Adrenal gland (tissue), 19 donors: ENCODE measurements at regions of chr11 and their contacts with region 1.

Region 1: DNA sequence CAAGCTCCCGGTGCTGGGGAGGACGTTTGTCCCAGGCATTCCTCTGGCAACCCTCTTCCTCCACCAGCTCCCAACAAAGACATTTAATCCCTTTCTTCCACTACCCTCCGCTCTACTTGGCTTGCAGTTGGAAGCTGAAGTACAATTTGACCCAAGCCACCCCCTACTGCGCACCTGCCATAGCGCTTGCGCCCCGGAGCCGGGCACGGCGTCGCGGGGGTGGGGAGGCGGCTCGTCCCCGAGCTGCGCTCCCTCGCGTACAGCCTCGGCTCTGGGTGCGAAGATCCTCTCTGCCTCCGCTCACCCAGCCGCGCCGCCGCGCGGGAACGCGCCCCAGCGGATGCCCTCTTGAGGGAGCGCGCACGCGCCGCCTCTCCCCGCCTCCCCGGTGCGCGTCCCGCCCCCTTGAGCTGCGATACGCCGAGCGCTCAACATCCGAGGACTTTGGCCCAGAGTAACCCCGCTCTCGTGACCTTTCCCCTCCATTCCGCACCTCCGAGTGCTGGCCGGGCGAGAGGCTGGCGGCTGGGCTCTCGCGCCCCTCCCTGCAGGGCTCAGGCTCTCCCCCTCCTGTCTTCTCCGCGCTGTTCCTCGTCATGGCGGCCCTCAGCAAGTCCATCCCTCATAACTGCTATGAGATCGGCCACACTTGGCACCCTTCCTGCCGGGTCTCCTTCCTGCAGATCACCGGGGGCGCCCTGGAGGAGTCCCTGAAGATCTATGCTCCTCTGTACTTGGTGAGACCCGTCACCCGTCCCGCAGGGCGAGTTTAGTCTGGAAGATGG is at the start of gene TMEM135:
- DNase-seq: peak; percentile 95 to 97 (median 95)
- H3K4me3 ChIP-seq: peak within 1 kb of the TSS; percentile 82 to 100 (median 96)
- H3K27ac ChIP-seq: peak within 1 kb of the TSS; percentile 74 to 89 (median 83)
- H3K4me1 ChIP-seq: peaks cover 23 to 27% of the 10 kb centered on the region in 2 donors
- H3K27me3 ChIP-seq: no peaks in the 10 kb centered on the region
- CTCF ChIP-seq: no peak
- POLR2A ChIP-seq: peak; percentile 67 to 88
- total RNA-seq, gene TMEM135: 32.6 to 101 (median 46.3) TPM

Region 2: DNA sequence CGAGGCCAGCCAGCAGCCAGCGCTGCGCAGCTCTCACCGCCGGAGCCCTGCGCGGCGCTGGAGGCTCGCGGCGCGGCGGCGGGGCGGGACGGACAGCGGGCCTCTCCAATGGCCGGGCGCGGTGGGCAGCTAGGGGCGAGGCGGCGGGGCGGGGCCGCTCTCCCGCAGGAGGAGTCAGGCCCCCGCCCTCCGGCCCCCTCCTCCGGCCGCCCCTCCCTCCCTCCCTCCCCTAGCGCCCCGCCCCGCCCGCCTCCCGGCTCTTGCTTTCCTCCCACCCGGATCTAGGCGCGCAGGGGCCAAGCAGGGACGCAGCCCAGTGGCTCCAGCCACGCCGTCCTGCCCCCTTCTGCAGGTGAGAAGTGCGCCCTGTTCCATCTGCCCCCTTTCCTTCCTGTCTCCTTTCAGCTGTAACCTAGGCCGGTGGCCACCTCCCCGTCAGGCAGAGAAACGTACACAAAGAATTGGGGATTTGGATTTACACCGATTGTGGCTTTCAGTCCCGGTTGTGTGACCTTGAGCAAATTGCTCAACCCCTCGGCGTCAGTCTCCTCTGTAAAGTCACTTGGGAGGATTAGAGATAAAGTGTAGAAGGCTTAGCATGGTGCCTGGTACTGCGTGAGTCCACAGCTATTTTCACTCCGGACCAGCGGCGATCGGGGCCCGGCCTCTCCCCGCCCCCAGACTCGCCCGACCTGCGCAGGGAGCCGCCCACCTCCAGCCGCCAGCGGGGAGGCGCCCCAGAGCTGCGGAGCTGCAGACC is 82.1 kb before region 1 on chr11 and contains the start of gene FZD4:
- intact Hi-C with region 1: loop called (anchors 10 kb)
- DNase-seq: peak; percentile 90 to 93 (median 92)
- H3K4me3 ChIP-seq: peak within 1 kb of the TSS; percentile 53 to 99 (median 72)
- H3K27ac ChIP-seq: peak within 1 kb of the TSS; percentile 67 to 91 (median 86)
- H3K4me1 ChIP-seq: peaks cover 10 to 16% of the 10 kb centered on the region in 2 donors
- H3K27me3 ChIP-seq: no peaks in the 10 kb centered on the region
- CTCF ChIP-seq: peak in 4 of 6 experiments; percentile 15 to 44 (median 26)
- POLR2A ChIP-seq: peak; percentile 52 to 97
- total RNA-seq, gene FZD4: 12.3 to 52.5 (median 24.6) TPM